ENCODE measurements at regions of chr1 and their contacts with region 1.

Region 1: GRCh38 chr1:158203693-158204457 is 23.2 kb downstream of the CD1D start:
- DNase-seq: peak; percentile 84
- H3K4me3 Mint-ChIP-seq: no peak overlapping the region
- H3K27ac Mint-ChIP-seq: no peak overlapping the region
- H3K4me1 Mint-ChIP-seq: no peaks in the 10 kb centered on the region
- H3K27me3 Mint-ChIP-seq: peaks cover 81% of the 10 kb centered on the region
- CTCF ChIP-seq: peak; percentile 83

Region 2: GRCh38 chr1:158163000-158163947 is 40.6 kb before region 1 on chr1:
- CTCF ChIA-PET with region 1: interaction called, 19 read pairs
- POLR2A ChIA-PET with region 1: interaction called, 3 read pairs
- intact Hi-C with region 1: no loop called
- DNase-seq: no peak
- H3K4me3 Mint-ChIP-seq: no peak overlapping the region
- H3K27ac Mint-ChIP-seq: no peak overlapping the region
- H3K4me1 Mint-ChIP-seq: no peaks in the 10 kb centered on the region
- H3K27me3 Mint-ChIP-seq: peaks cover 69% of the 10 kb centered on the region
- CTCF ChIP-seq: no peak

Region 3: DNA sequence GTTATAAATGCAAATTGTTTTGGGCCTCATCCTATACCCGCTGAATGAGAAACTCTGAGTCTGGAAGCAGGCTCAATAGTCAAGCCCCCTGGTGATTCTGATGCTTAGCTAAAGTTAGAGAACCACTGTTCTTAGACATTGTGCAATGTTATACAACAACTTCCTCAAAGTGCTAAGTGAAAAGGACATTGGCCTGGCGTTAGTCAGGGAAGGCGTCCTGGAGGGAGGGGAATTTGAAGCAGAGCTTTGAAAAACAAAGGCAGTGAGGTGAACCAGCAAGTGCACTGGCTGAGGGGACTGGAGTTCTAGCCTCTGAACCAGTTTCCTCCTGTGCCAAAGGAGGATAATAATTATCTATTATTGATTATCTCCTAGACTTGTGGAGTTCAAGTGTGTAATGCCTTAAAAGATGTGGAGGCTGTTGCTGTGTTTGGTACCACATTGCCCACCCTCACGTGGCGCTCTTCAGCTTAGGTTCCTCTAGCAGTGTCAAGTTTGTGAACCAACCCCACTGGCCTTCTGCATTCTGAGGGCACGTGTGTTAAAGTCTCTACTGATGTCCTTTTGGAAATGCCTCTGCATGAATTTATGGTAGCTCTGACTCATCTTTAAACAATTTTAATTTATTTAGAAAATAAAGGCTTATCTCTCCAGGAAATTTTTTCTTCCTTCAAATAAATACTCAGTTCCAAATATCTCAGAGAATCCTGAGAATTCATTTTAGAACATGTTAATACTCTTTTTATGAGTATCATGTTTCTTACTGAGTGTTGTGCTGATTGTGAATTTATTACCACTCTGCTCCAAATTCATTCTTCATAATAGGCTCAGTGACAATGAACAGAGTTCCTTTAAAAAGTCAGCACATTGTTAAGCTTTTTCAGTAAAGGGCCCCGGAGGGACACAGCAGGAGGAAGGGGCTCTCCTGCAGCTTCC is 17.8 kb before region 1 on chr1:
- CTCF ChIA-PET with region 1: interaction called, 28 read pairs
- POLR2A ChIA-PET with region 1: no interaction called
- intact Hi-C with region 1: no loop called
- DNase-seq: peak; percentile 6
- H3K4me3 Mint-ChIP-seq: no peak overlapping the region
- H3K27ac Mint-ChIP-seq: no peak overlapping the region
- H3K4me1 Mint-ChIP-seq: no peaks in the 10 kb centered on the region
- H3K27me3 Mint-ChIP-seq: peaks cover 51% of the 10 kb centered on the region
- CTCF ChIP-seq: no peak

Region 4: DNA sequence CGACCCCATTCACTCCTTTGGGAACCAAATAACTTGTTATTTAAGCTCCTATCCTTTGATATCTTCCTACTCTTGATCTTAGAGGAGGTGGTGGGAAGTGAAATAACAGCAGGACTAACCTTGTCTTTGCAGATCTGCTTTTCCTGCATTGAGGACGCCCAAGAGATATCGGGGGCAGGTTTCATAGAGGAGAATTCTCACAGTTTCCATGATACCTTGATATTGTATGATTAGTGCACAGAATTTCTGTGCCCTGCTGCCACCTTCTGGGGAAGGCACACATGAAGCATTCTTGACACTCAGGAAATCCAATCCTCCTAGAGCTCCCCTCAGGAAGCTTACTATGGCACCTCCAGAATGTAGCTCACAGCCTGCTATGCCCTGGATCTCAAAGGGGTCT is 125.9 kb after region 1 on chr1:
- CTCF ChIA-PET with region 1: interaction called, 16 read pairs
- POLR2A ChIA-PET with region 1: no interaction called
- intact Hi-C with region 1: loop called (anchors 1 kb)
- DNase-seq: peak; percentile 49
- H3K4me3 Mint-ChIP-seq: no peak overlapping the region
- H3K27ac Mint-ChIP-seq: no peak overlapping the region
- H3K4me1 Mint-ChIP-seq: no peaks in the 10 kb centered on the region
- H3K27me3 Mint-ChIP-seq: peaks cover 12% of the 10 kb centered on the region
- CTCF ChIP-seq: no peak

Region 5: DNA sequence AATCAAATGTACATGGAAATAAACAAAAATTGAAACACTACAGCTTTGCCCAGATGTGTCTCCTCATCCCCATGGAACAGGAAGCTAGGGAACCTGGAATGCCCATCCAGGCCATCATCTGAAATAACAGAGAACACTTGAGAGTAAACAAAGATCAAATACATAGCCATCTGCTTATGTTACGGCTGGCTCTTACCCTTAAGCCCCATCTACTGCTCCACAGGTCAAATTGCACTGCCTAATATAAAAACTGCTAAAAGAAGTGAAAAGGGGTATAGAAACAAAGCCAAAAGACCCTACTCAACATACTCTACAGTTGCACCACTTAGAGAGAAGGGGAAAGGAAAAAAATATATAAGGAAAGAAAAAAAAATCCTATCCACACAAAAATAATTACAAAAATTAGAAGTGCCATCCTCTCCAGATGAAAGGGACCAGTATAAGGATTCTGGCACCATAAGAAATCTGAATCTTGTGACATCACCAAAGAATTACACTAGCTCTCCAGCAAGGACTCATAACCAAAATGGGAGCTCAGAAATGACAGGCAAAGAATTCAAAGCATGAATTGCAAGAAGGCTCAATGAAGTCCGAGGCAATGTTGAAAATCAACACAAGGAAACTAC is 323.4 kb after region 1 on chr1:
- CTCF ChIA-PET with region 1: interaction called, 24 read pairs
- POLR2A ChIA-PET with region 1: interaction called, 5 read pairs
- intact Hi-C with region 1: loop called (anchors 1 kb)
- DNase-seq: peak; percentile 53
- H3K4me3 Mint-ChIP-seq: no peak overlapping the region
- H3K27ac Mint-ChIP-seq: no peak overlapping the region
- H3K4me1 Mint-ChIP-seq: no peaks in the 10 kb centered on the region
- H3K27me3 Mint-ChIP-seq: peaks cover 100% of the 10 kb centered on the region
- CTCF ChIP-seq: peak; percentile 93

Region 6: DNA sequence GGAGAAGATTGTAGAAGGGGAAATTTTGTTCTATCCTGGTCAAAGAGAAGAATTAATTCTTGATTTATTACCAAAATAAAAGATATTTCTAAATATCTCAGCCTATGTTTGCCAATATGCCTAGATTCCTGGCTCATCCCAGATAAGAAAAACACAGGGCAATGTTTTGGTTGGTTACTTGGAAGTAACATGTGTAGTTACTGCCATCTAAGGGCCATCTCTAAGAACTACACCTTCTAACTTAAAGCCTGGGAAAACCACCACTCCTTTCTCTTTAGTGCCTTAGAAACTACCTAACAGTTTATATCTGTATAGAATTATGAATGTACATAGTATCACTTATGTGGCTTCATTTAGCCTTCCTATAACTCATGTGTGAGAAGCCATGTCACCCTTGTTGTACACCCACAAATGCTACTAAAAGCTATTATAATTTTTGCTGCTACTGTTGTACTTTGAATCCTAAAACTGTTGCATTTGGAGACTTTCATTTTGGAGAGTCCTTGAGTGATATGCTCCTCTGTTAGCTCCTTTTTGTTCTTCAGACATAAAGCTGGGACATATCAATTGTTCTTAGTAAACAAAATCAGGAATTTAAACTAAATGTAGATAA is 868.2 kb after region 1 on chr1:
- CTCF ChIA-PET with region 1: interaction called, 69 read pairs
- POLR2A ChIA-PET with region 1: interaction called, 3 read pairs
- intact Hi-C with region 1: loop called (anchors 1 kb)
- DNase-seq: peak; percentile 78
- H3K4me3 Mint-ChIP-seq: no peak overlapping the region
- H3K27ac Mint-ChIP-seq: no peak overlapping the region
- H3K4me1 Mint-ChIP-seq: no peaks in the 10 kb centered on the region
- H3K27me3 Mint-ChIP-seq: no peaks in the 10 kb centered on the region
- CTCF ChIP-seq: peak; percentile 91